Calu3 (cell line): ENCODE measurements at regions of chr15 and their contacts with region 1.

Region 1: GRCh38 chr15:40893733-40894688 is at the start of gene VPS18:
- DNase-seq: peak; percentile 95
- H3K4me3 Mint-ChIP-seq: peak within 1 kb of the TSS; percentile 89
- H3K27ac Mint-ChIP-seq: peak within 1 kb of the TSS; percentile 83
- H3K4me1 Mint-ChIP-seq: peaks cover 18% of the 10 kb centered on the region
- H3K27me3 Mint-ChIP-seq: no peaks in the 10 kb centered on the region
- CTCF ChIP-seq: peak; percentile 63
- total RNA-seq, gene VPS18: 14.3 and 16.6 TPM in 2 replicates

Region 2: DNA sequence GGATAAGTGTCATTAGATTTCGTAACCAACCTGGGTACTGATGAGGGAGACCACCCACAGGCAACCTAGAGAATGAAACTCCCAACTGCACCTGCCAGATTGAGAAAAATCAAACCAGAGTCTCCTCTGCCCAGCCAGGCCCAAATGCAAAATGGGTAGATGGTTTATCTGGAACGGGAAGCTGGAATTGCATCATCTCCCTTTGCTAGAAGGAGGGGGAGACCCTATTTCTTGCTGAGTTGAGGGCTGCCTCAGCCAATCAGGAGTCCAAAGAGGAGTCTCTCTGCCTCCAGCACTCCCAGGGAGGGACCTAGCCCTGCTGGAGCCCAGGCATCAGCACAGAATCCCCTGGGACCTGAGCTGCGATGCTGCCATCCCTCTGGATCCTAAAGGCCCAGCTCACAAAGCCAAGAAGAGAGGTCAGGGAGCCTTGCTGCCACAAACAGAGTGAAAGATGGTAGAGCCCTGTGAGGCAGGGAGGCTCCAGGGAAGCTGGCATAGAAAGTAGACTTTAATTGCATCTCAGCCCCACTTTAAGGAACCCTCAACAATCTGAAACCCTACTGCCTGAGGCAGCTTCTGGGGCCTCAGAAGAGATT is 147.0 kb before region 1 on chr15:
- CTCF ChIA-PET with region 1: interaction called, 10 read pairs
- intact Hi-C with region 1: no loop called
- DNase-seq: no peak
- H3K4me3 Mint-ChIP-seq: no peak overlapping the region
- H3K27ac Mint-ChIP-seq: no peak overlapping the region
- H3K4me1 Mint-ChIP-seq: no peaks in the 10 kb centered on the region
- H3K27me3 Mint-ChIP-seq: no peaks in the 10 kb centered on the region
- CTCF ChIP-seq: no peak

Region 3: GRCh38 chr15:40847205-40847961 is 46.6 kb before region 1 on chr15:
- CTCF ChIA-PET with region 1: interaction called, 5 read pairs
- intact Hi-C with region 1: loop called (anchors 2 kb)
- DNase-seq: peak; percentile 64
- H3K4me3 Mint-ChIP-seq: peak overlapping the region; percentile 79
- H3K27ac Mint-ChIP-seq: peak overlapping the region; percentile 70
- H3K4me1 Mint-ChIP-seq: peaks cover 16% of the 10 kb centered on the region
- H3K27me3 Mint-ChIP-seq: no peaks in the 10 kb centered on the region
- CTCF ChIP-seq: no peak

Region 4: DNA sequence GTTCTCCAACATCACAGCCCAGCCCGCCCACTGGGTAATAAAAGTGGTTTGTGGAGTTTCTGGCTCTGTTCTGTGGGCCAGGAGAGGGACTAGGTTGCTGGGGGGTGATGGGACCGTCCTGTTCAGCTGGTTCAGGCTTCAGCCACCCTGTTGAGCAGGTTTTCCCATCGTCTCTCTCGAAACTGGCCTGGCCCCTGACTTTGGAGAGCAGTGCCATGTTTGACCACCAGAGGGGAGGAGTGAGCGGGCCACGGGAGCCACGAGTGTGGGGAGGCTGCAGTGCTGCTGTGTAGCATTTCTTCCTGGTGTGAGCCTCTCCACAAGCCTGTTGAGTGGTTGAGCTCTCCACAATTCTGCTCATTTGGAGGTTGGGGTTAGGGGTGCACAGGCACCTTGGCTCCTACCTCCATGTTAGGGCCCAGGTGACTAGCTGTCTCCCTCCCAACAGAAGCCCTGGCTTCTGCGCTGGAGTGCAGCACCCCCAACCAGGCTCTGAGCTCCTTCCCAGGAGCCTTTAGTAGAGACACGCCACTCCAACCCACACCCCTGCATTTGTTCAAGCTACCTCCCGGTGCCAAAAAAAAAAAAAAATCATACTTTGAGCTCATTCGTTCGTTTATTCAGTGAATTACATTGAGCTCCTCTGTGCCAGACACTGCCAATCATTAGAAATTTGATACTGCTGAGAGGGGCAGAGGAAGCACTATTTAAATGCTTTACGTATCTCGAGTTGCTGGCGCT is 36.2 kb before region 1 on chr15:
- CTCF ChIA-PET with region 1: interaction called, 95 read pairs
- intact Hi-C with region 1: loop called (anchors 1 kb)
- DNase-seq: peak; percentile 90
- H3K4me3 Mint-ChIP-seq: no peak overlapping the region
- H3K27ac Mint-ChIP-seq: peak overlapping the region; percentile 44
- H3K4me1 Mint-ChIP-seq: peaks cover 12% of the 10 kb centered on the region
- H3K27me3 Mint-ChIP-seq: no peaks in the 10 kb centered on the region
- CTCF ChIP-seq: peak; percentile 63

Region 5: DNA sequence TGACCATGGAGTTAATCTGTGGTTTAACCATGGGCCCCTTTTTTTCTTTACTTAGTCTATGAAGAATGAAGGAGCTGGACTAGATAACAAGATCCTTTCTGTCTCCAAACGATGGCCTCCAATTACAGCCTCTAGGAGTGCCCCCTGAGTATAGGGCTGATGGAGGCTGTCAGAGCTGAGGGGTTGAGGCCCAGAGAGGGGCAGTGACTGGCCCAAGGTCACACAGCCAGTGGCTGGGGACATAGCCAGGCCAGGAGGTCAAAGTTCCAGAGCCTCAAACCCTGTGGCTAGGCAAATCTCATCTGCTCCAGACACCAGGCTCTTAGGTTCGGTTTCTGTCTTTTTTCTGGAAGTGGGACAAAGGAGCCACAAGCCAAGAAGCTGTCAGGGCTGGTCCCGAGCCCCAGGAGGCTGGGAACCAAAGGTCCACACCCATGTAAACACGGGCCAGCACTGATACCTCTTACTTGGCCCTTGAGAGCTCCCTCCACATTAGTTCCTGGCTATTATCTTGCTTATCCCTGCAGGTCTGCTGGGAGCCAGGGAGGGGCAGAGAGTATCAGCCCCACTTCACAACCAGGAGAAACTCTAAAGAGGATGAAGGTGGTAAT is 30.2 kb before region 1 on chr15:
- CTCF ChIA-PET with region 1: interaction called, 95 read pairs
- intact Hi-C with region 1: loop called (anchors 1 kb)
- DNase-seq: no peak
- H3K4me3 Mint-ChIP-seq: no peak overlapping the region
- H3K27ac Mint-ChIP-seq: no peak overlapping the region
- H3K4me1 Mint-ChIP-seq: peaks cover 26% of the 10 kb centered on the region
- H3K27me3 Mint-ChIP-seq: no peaks in the 10 kb centered on the region
- CTCF ChIP-seq: no peak

Region 6: DNA sequence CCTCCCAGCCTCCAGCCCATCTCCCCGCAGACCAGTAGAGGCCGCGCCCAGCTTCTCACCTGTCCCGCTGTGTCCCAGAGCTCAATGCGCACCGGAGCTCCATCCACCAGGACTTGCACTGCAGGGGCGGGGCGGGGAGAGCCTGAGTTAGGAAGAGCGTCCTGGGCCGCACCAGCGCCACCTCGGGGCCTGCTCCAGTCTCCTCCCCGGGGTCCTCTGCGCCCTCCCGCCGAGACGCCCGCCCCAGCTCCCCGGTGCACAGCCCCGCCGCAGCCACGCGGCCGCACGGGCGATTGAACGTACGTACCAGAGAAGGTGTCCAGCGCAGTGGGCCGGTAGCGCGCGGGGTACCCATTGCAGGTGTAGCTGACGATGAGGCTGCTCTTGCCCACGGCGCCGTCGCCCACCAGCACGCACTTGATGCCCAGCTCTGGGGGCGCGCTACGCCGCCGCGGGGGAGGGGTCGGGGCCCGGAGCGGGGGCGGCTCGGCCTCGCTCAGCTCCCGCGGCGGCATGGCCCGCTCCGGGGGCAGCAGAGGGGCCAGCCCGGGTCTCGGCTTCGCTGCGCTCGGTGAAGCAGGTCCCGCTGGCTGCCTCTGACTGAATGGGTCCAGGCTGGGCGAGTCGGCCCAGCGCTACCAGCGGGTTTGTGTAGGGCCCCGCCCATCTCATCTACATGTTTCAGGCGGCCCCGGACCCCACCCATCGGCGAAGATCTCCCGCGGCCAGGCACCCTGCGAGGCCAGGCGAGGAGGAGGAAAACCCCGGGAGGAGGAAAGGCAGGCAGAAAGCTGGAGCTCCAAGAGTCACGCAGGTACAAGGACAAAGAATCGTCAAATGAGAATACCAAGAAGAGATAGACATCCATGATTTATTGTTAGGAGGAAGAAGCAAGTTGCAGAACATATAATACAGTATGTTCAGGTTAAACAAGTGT is 20.1 kb before region 1 on chr15 and contains the start of gene RHOV:
- CTCF ChIA-PET with region 1: interaction called, 21 read pairs
- intact Hi-C with region 1: no loop called
- DNase-seq: peak; percentile 87
- H3K4me3 Mint-ChIP-seq: peak within 1 kb of the TSS; percentile 71
- H3K27ac Mint-ChIP-seq: no peak within 1 kb of the TSS
- H3K4me1 Mint-ChIP-seq: peaks cover 34% of the 10 kb centered on the region
- H3K27me3 Mint-ChIP-seq: no peaks in the 10 kb centered on the region
- CTCF ChIP-seq: no peak
- total RNA-seq, gene RHOV: 4.2 and 4.9 TPM in 2 replicates

Region 7: GRCh38 chr15:40982855-40983254 is 88.8 kb after region 1 on chr15:
- CTCF ChIA-PET with region 1: no interaction called
- intact Hi-C with region 1: no loop called
- DNase-seq: no peak
- H3K4me3 Mint-ChIP-seq: no peak overlapping the region
- H3K27ac Mint-ChIP-seq: no peak overlapping the region
- H3K4me1 Mint-ChIP-seq: no peaks in the 10 kb centered on the region
- H3K27me3 Mint-ChIP-seq: no peaks in the 10 kb centered on the region
- CTCF ChIP-seq: no peak